ENCODE measurements at regions of chr4 and their contacts with region 1.

Region 1: DNA sequence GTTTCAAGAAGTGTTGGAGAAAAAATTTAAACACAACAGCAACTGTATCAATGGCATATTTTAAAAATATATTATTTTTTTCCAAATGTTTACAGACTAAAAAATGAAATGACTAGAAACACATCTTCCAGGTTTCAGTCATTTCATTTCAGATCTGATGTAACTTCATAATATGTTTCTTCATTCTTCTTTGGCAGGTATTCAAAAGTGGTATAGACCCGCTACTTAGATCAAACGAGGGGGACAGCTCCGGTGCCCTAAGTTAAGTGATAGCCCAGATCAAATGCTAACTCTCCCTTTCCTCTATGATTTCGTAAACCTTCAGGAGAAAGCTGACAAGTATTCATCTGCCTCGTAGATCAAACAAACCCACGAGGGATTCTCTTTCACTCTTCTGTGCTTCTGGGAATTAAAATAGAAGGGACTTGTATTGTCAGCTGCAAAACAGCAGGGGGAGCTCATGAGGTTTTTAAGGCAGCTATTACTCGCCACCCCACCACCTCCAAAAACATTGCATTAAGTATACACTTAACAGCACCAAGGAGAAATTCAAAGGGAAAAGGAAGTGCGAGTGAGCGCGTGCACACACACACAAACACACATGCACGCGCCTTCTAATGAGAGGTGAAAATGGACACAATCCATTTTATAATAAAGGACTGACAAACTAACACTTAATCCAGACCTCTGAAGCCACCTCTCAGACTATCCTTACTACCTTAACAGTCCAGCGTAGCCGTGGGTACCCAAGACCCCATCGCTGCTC is 21.4 kb downstream of the HELT start:
- DNase-seq: peak; percentile 53
- H3K4me3 Mint-ChIP-seq: peak overlapping the region; percentile 51
- H3K27ac Mint-ChIP-seq: peak overlapping the region; percentile 24
- H3K4me1 Mint-ChIP-seq: peaks cover 4% of the 10 kb centered on the region
- H3K27me3 Mint-ChIP-seq: peaks cover 7% of the 10 kb centered on the region

Region 2: DNA sequence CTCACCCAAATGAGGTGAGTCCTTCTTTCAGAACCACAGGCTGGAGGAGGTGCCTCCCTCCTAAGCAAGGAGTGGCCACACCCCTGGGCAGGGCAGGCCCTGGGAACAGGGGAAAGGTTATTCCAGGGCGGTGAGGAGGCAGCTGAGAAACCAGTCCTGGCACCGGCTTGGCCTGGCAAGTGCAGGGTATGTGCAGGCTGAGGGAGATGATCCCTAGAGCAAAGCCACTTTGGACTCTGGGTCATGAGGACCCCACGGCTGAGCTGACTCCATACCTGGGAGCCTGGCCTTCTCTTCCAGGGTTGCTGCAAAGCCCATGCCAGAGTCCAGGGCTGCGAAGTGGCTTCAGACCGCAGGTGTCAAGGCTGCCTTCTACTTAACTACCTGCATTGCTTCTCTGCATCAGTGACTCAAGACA is 70.9 kb before region 1 on chr4:
- CTCF ChIA-PET with region 1: no interaction called
- POLR2A ChIA-PET with region 1: no interaction called
- intact Hi-C with region 1: no loop called
- DNase-seq: no peak
- H3K4me3 Mint-ChIP-seq: no peak overlapping the region
- H3K27ac Mint-ChIP-seq: no peak overlapping the region
- H3K4me1 Mint-ChIP-seq: peaks cover 8% of the 10 kb centered on the region
- H3K27me3 Mint-ChIP-seq: peaks cover 13% of the 10 kb centered on the region

Region 3: DNA sequence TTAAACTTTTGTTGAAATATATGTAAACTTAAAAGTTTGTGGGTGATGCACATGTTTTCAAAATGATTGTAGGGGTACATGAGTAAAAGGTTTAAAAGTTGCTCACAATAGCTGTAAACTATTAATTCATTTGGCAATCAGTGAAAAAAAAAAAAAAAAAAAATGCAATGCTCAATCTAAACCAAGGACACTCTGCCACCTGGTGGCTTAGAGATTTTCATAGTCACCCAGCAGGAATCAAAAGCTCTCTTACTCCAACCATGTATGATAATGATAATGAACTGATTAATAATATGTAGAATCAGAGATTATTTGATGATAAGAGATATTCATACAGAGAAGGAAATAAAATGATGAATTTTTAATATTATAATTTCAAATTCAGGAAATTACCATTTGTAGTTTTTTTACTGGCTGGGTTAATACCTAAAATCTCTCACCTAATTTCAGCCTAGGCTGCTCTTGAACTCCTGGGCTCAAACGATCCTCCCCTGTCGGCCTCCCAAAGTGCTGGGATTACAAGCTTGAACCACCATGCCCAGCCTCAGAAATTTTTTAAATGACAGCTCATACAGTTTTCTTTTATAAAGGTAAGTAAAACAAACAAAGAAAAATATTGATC is 56.5 kb after region 1 on chr4:
- CTCF ChIA-PET with region 1: interaction called, 28 read pairs
- POLR2A ChIA-PET with region 1: no interaction called
- intact Hi-C with region 1: loop called (anchors 1 kb)
- DNase-seq: no peak
- H3K4me3 Mint-ChIP-seq: no peak overlapping the region
- H3K27ac Mint-ChIP-seq: no peak overlapping the region
- H3K4me1 Mint-ChIP-seq: no peaks in the 10 kb centered on the region
- H3K27me3 Mint-ChIP-seq: peaks cover 11% of the 10 kb centered on the region

Region 4: GRCh38 chr4:185134307-185134869 is 94.7 kb after region 1 on chr4:
- CTCF ChIA-PET with region 1: interaction called, 87 read pairs
- POLR2A ChIA-PET with region 1: no interaction called
- intact Hi-C with region 1: loop called (anchors 1 kb)
- DNase-seq: no peak
- H3K4me3 Mint-ChIP-seq: no peak overlapping the region
- H3K27ac Mint-ChIP-seq: no peak overlapping the region
- H3K4me1 Mint-ChIP-seq: no peaks in the 10 kb centered on the region
- H3K27me3 Mint-ChIP-seq: peaks cover 25% of the 10 kb centered on the region

Region 5: GRCh38 chr4:185183619-185184281 is 144.1 kb after region 1 on chr4:
- CTCF ChIA-PET with region 1: interaction called, 51 read pairs
- POLR2A ChIA-PET with region 1: no interaction called
- intact Hi-C with region 1: loop called (anchors 1 kb)
- DNase-seq: peak; percentile 78
- H3K4me3 Mint-ChIP-seq: no peak overlapping the region
- H3K27ac Mint-ChIP-seq: no peak overlapping the region
- H3K4me1 Mint-ChIP-seq: peaks cover 42% of the 10 kb centered on the region
- H3K27me3 Mint-ChIP-seq: no peaks in the 10 kb centered on the region

Region 6: GRCh38 chr4:186037692-186038658 is 998.3 kb after region 1 on chr4:
- CTCF ChIA-PET with region 1: no interaction called
- POLR2A ChIA-PET with region 1: no interaction called
- intact Hi-C with region 1: loop called (anchors 5 kb)
- DNase-seq: peak; percentile 13
- H3K4me3 Mint-ChIP-seq: no peak overlapping the region
- H3K27ac Mint-ChIP-seq: no peak overlapping the region
- H3K4me1 Mint-ChIP-seq: no peaks in the 10 kb centered on the region
- H3K27me3 Mint-ChIP-seq: peaks cover 17% of the 10 kb centered on the region

Measured in activated CD4-positive, alpha-beta memory T cell treated with anti-CD3 and anti-CD28 coated beads for 36 hours (primary cell).